GM12878 (cell line): ENCODE measurements at regions of chr18 and their contacts with region 1.

Region 1: GRCh38 chr18:24488824-24489493 is 28.5 kb downstream of the HRH4 start:
- DNase-seq: peak; percentile 3
- ATAC-seq: peak; percentile 32; the same call in 2 of the 3 replicates
- H3K4me3 ChIP-seq: no peak overlapping the region
- H3K27ac ChIP-seq: no peak overlapping the region
- H3K4me1 ChIP-seq: peaks cover 10% of the 10 kb centered on the region
- H3K27me3 ChIP-seq: peaks cover 0 to 6% of the 10 kb centered on the region in 2 experiments; a peak in 2 of 4 replicates
- CTCF ChIP-seq: peak; percentile 55 to 63 (median 60); a peak in 5 of 6 replicates
- EP300 ChIP-seq: no peak
- POLR2A ChIP-seq: no peak
- RAD21 ChIP-seq: peak; percentile 68

Region 2: DNA sequence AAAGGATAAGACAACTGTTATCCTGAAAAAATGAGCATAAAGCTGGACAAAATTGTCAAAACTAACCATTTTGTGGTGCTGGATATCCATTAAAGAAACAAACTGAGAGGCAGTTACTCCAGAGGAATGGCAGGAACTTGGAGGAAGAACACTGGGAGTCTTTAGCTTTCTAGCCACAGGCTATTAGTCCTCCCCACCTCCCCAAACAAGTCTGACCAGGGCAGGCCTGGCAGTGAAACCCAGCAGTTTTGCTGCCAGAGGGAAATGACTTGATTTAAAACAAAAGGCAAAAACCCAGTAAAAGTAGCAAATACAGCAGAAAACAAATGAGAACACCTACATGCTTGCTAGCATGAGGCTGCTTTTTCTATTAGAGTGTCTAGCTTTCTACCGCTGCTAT is 126.2 kb before region 1 on chr18:
- CTCF ChIA-PET with region 1: interaction called, 124 read pairs
- POLR2A ChIA-PET with region 1: no interaction called
- RAD21 ChIA-PET with region 1: interaction called, 59 read pairs
- SMC1A ChIA-PET with region 1: interaction called, 33 read pairs
- in situ Hi-C with region 1: loop called (anchors 5 kb)
- intact Hi-C with region 1: loop called (anchors 1 kb)
- DNase-seq: no peak
- ATAC-seq: no peak
- H3K4me3 ChIP-seq: no peak overlapping the region
- H3K27ac ChIP-seq: no peak overlapping the region
- H3K4me1 ChIP-seq: no peaks in the 10 kb centered on the region
- H3K27me3 ChIP-seq: 0 out of 4 replicates have a peak, but pooled peaks cover 0 to 2% of the 10 kb centered on the region in 2 experiments
- CTCF ChIP-seq: no peak
- EP300 ChIP-seq: no peak
- POLR2A ChIP-seq: no peak
- RAD21 ChIP-seq: no peak

Region 3: DNA sequence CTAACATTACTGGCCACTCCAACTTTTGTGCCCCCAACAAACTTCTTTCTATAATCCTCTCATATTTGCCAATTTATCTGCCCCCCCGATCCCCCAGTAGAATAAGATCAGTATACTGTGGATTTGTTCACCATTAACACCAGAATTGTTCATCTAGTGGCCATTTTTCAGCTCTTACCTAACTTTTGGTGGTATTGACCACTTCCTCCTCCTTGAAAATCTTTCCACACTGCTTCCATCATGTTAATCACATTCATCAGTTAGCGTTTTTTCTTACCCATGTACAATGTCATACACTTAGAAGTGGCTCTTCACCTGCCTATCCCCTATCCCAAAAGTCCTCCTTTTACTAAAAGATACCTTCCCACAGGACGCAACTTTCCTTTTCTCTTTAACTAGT is 56.3 kb before region 1 on chr18:
- CTCF ChIA-PET with region 1: interaction called, 50 read pairs
- POLR2A ChIA-PET with region 1: no interaction called
- RAD21 ChIA-PET with region 1: interaction called, 13 read pairs
- SMC1A ChIA-PET with region 1: interaction called, 7 read pairs
- in situ Hi-C with region 1: no loop called
- intact Hi-C with region 1: loop called (anchors 10 kb)
- DNase-seq: no peak
- ATAC-seq: no peak
- H3K4me3 ChIP-seq: no peak overlapping the region
- H3K27ac ChIP-seq: no peak overlapping the region
- H3K4me1 ChIP-seq: no peaks in the 10 kb centered on the region
- H3K27me3 ChIP-seq: no peaks in the 10 kb centered on the region
- CTCF ChIP-seq: no peak
- EP300 ChIP-seq: no peak
- POLR2A ChIP-seq: no peak
- RAD21 ChIP-seq: no peak

Region 4: DNA sequence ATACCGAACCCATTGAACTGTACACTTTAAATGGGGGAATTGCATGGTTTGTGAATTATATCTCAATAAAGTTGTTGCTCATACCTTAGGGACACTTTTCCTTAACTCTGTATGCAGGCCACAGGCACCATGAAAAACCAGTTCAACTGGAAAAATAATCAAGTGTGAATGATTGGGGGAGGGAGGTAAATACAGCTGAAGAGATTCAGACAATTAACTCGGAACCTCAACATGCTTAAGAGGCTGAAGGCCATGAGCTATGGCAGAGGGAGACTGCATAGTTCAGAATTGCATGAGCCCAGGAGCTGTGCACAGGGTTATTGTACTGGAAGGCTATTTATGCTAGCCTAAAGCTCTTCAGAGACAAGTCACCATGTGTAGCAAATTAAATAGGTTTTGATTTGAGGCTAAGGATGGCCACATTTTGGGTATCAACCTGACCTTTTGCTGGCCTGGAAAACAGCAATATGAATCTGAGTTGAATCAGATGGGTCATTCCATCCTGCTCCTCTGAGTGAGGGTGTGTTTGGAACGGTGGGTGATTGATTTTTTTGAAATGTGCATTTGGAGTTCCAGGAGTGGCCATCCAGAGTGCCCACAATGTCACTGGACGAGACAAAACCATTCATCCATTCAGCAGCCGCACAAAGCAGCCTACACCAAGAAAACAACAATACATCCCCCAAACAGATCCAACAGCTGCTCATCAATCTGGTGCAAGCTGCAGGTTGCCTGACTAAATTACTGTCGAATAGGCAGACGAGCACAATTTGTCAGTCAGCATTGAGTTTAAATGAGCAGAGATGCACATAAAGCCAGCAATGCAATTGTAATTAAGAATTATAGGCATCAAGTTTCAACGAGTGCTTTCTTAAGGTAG is 13.9 kb after region 1 on chr18:
- CTCF ChIA-PET with region 1: interaction called, 14 read pairs
- POLR2A ChIA-PET with region 1: no interaction called
- RAD21 ChIA-PET with region 1: interaction called, 3 read pairs
- SMC1A ChIA-PET with region 1: interaction called, 5 read pairs
- in situ Hi-C with region 1: no loop called
- intact Hi-C with region 1: no loop called
- DNase-seq: no peak
- ATAC-seq: no peak
- H3K4me3 ChIP-seq: no peak overlapping the region
- H3K27ac ChIP-seq: no peak overlapping the region
- H3K4me1 ChIP-seq: no peaks in the 10 kb centered on the region
- H3K27me3 ChIP-seq: no peaks in the 10 kb centered on the region; a peak in 2 of 4 replicates
- CTCF ChIP-seq: no peak
- EP300 ChIP-seq: no peak
- POLR2A ChIP-seq: no peak
- RAD21 ChIP-seq: no peak

Region 5: GRCh38 chr18:24726727-24727492 is 238.0 kb after region 1 on chr18:
- CTCF ChIA-PET with region 1: interaction called, 129 read pairs
- POLR2A ChIA-PET with region 1: no interaction called
- RAD21 ChIA-PET with region 1: interaction called, 11 read pairs
- SMC1A ChIA-PET with region 1: interaction called, 16 read pairs
- in situ Hi-C with region 1: loop called (anchors 5 kb)
- intact Hi-C with region 1: loop called (anchors 1 kb)
- DNase-seq: no peak
- ATAC-seq: peak; percentile 64
- H3K4me3 ChIP-seq: no peak overlapping the region
- H3K27ac ChIP-seq: no peak overlapping the region
- H3K4me1 ChIP-seq: no peaks in the 10 kb centered on the region
- H3K27me3 ChIP-seq: no peaks in the 10 kb centered on the region; a peak in 1 of 4 replicates
- CTCF ChIP-seq: peak; percentile 74 to 79 (median 78)
- EP300 ChIP-seq: no peak
- POLR2A ChIP-seq: no peak
- RAD21 ChIP-seq: peak; percentile 84

Region 6: DNA sequence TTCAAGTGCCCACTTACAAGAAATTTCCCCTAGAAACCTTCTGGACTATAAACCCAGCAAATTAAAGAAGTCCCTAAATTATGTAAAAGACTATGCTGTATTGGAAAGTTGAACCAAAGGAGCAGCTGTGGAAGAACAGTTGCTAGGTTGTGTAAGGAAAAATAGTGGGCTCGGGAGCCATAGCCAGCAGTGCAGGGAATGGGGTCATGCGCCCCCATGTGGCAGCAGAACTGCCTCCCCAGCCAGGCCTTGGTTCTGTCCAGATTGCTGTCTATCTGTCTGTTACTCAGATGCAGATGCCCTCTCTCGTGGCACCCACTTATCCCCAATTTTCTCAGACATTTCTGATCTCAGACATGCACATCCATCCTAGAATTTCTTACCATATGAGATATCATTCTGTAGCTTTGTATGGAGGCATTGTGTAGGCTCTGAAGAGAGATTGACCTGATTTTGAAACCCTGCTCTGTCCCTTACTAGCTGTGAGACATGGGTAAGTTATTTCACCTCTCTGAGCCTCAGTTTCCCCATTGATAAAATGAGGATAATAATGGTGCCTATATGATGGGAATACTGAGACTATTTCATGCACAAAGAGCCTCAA is 1343.1 kb after region 1 on chr18:
- CTCF ChIA-PET with region 1: interaction called, 4 read pairs
- POLR2A ChIA-PET with region 1: no interaction called
- RAD21 ChIA-PET with region 1: no interaction called
- SMC1A ChIA-PET with region 1: no interaction called
- in situ Hi-C with region 1: no loop called
- intact Hi-C with region 1: loop called (anchors 5 kb)
- DNase-seq: no peak
- ATAC-seq: peak; percentile 92
- H3K4me3 ChIP-seq: no peak overlapping the region
- H3K27ac ChIP-seq: no peak overlapping the region
- H3K4me1 ChIP-seq: no peaks in the 10 kb centered on the region
- H3K27me3 ChIP-seq: peaks cover 0 to 2% of the 10 kb centered on the region in 2 experiments; a peak in 1 of 4 replicates
- CTCF ChIP-seq: peak; percentile 73 to 86 (median 79)
- EP300 ChIP-seq: no peak
- POLR2A ChIP-seq: no peak
- RAD21 ChIP-seq: peak; percentile 60